Endothelial cell of umbilical vein (primary cell): ENCODE measurements at regions of chr12 and their contacts with region 1.

Region 1: DNA sequence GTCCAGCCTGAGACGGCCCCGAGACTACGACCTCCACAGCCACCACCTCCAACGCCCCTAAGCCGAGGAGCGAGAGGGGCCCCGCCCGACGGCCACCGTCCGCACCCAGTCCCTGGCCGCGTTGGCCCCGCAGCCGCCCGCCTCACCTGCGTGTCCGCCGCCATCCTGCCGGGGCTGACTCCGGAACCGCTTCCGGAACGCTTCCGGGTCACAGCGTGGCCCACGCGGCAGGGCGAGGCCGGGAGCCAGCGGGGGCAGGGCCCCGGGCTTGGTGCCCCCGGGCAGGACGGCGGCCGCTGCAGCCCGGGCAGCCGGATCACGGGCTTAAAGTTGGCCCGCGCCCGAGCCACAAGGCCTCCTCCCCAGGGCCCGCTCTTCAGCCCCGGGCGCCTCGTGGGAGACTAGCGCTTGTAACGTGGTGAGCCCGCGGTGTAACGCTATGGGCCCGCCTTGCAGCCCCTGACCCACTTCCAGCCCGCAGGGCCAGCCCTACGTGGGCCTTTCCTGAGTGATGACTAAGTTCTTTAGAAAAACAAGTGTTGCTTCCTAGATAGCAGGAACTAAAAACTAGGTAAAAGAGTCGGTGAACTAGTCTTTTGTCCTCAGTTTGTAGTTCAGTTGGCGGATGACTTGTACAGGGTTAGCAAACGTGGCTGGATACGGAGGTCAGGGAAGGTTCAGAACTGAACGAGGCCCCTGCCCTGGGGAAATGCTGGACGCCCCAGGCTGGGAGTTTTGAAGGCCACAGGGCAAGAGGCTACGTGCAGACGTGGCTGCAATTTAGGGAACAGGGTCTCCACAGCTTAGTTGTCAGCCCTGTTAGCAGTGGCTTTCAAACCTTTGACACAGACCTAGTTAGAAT is at the start of gene GCN1:
- DNase-seq: peak; percentile 85
- H3K4me3 ChIP-seq: peak within 1 kb of the TSS; percentile 22 to 76 (median 67)
- H3K27ac ChIP-seq: peak within 1 kb of the TSS; percentile 74
- H3K4me1 ChIP-seq: peaks cover 48% of the 10 kb centered on the region
- H3K27me3 ChIP-seq: no peaks in the 10 kb centered on the region
- CTCF ChIP-seq: no peak
- POLR2A ChIP-seq: peak; percentile 59
- total RNA-seq, gene GCN1: 79.1 and 101 TPM in 2 replicates

Region 2: DNA sequence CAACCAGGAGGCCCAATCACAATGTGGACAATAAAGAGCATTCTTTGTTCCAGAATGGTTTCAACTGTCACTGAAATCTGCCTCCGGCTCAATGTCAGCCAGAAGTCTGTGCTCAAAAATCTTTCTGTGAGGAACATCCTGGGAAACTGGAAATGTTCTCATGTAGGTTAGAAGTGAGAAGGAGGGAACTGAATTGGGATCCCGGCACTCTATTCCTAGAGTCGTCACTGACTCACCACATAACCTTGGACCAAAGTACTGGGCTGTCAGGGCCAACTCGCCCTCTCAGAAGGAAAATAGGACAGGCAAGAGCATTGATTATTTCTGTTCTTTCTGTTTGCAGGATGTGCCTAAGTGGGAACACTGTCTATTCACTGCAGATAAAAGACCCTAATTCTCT is 469.2 kb before region 1 on chr12:
- CTCF ChIA-PET with region 1: no interaction called
- POLR2A ChIA-PET with region 1: no interaction called
- dilution Hi-C with region 1: no loop called
- intact Hi-C with region 1: no loop called
- DNase-seq: no peak
- H3K4me3 ChIP-seq: no peak overlapping the region
- H3K27ac ChIP-seq: no peak overlapping the region
- H3K4me1 ChIP-seq: no peaks in the 10 kb centered on the region
- H3K27me3 ChIP-seq: no peaks in the 10 kb centered on the region
- CTCF ChIP-seq: no peak
- POLR2A ChIP-seq: no peak

Region 3: GRCh38 chr12:120167529-120168095 is 27.2 kb before region 1 on chr12:
- CTCF ChIA-PET with region 1: interaction called, 3 read pairs
- POLR2A ChIA-PET with region 1: interaction called, 20 read pairs
- dilution Hi-C with region 1: no loop called
- intact Hi-C with region 1: no loop called
- DNase-seq: peak; percentile 54
- H3K4me3 ChIP-seq: no peak overlapping the region
- H3K27ac ChIP-seq: peak overlapping the region; percentile 62
- H3K4me1 ChIP-seq: peaks cover 12% of the 10 kb centered on the region
- H3K27me3 ChIP-seq: no peaks in the 10 kb centered on the region
- CTCF ChIP-seq: no peak
- POLR2A ChIP-seq: no peak

Region 4: DNA sequence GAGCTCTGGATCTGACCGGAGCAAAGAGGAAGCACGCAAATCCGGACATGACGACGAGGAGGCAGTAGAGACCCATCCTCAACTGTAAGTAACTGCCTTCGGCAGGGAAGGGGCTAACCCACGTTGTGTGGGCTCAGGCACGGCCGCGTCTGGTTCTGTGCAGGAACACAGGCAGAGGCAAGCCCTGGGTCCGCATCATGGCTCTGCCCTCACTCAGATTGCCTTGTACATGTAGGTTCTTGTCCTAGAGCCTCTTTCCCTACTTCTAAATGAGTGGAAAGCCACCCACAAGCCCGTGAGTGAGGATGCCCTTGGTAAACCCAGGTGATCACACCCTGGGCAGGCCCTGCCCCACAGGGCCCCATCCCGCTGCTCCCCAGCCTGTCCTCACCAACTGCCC is 15.1 kb after region 1 on chr12:
- CTCF ChIA-PET with region 1: no interaction called
- POLR2A ChIA-PET with region 1: interaction called, 30 read pairs
- dilution Hi-C with region 1: no loop called
- intact Hi-C with region 1: no loop called
- DNase-seq: no peak
- H3K4me3 ChIP-seq: no peak overlapping the region
- H3K27ac ChIP-seq: no peak overlapping the region
- H3K4me1 ChIP-seq: no peaks in the 10 kb centered on the region
- H3K27me3 ChIP-seq: no peaks in the 10 kb centered on the region
- CTCF ChIP-seq: no peak
- POLR2A ChIP-seq: no peak

Region 5: GRCh38 chr12:120257041-120257821 is 62.5 kb after region 1 on chr12:
- CTCF ChIA-PET with region 1: interaction called, 3 read pairs
- POLR2A ChIA-PET with region 1: interaction called, 76 read pairs
- dilution Hi-C with region 1: no loop called
- intact Hi-C with region 1: no loop called
- DNase-seq: peak; percentile 98
- H3K4me3 ChIP-seq: no peak overlapping the region
- H3K27ac ChIP-seq: peak overlapping the region; percentile 96
- H3K4me1 ChIP-seq: peaks cover 71% of the 10 kb centered on the region
- H3K27me3 ChIP-seq: no peaks in the 10 kb centered on the region
- CTCF ChIP-seq: no peak
- POLR2A ChIP-seq: peak; percentile 24